PC-9 (cell line): ENCODE measurements at regions of chr1 and their contacts with region 1.

Region 1: GRCh38 chr1:184075055-184076029 is 23.8 kb downstream of the TSEN15 start:
- DNase-seq: peak; percentile 15 to 43
- H3K4me3 ChIP-seq: no peak overlapping the region
- H3K27ac ChIP-seq: no peak overlapping the region
- H3K4me1 ChIP-seq: no peaks in the 10 kb centered on the region
- H3K27me3 ChIP-seq: no peaks in the 10 kb centered on the region
- CTCF ChIP-seq: peak; percentile 85

Region 2: DNA sequence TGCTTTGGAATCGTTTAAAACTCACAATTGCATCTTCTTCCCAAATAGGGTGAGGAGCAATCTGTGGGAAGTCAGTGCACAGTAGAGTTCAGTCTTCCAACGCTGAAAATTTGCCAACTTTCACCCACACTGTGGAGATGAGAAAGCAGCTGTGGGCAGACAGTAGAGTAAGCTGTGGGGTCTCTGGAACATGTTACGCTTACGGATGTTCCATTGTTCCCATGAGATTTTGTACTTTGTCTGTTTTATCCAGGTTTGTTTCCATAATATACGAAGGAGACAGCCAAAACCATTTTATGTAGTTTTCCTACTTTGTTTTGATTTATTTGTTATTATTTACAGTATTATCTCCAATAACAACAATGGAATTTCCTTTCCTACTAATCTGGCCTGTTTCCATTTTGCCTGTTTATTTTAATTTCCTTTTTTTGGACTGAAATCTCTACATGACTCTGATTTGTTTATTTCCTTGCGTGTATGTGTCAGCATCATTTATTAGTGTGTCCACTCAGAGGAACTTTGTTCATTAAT is 335.5 kb before region 1 on chr1:
- CTCF ChIA-PET with region 1: no interaction called
- POLR2A ChIA-PET with region 1: no interaction called
- intact Hi-C with region 1: no loop called
- DNase-seq: no peak
- H3K4me3 ChIP-seq: no peak overlapping the region
- H3K27ac ChIP-seq: no peak overlapping the region
- H3K4me1 ChIP-seq: peaks cover 23% of the 10 kb centered on the region
- H3K27me3 ChIP-seq: no peaks in the 10 kb centered on the region
- CTCF ChIP-seq: no peak

Region 3: DNA sequence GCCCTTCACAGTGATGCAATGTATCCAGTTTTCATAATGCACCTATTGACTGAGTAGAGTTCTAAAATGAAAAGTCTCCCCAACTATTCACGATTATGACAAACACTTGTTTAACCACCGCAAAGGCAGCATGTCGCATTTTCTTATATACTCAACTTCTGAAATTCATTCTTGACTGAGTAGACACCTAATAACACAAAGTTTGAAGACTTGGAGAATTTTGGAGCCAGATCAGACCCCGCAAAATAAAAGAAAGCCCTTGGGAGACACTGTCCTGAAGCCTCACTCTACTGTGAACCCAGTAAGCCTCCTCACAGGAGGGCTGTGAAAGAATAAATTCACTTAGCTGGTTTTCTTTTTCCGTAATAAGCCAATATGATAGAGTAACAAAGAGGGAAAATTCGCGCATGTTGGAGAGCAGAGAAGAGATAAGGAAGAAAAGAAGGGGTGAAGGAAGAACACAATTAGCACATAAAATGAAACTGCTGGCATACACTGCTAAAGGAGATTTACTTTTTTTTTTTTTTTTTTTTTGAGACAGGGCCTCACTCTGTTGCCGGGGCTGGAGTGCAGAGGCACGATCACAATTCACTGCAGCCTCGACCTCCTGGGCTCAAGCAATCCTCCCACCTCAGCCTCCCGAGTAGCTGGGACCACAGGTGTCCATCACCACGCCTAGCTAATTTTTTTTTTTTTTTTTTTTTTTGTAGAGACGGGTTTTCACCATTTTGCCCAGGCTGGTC is 37.3 kb before region 1 on chr1:
- CTCF ChIA-PET with region 1: no interaction called
- POLR2A ChIA-PET with region 1: no interaction called
- intact Hi-C with region 1: no loop called
- DNase-seq: no peak
- H3K4me3 ChIP-seq: no peak overlapping the region
- H3K27ac ChIP-seq: no peak overlapping the region
- H3K4me1 ChIP-seq: no peaks in the 10 kb centered on the region
- H3K27me3 ChIP-seq: peaks cover 16% of the 10 kb centered on the region; the same call in 1 of the 2 replicates
- CTCF ChIP-seq: no peak

Region 4: GRCh38 chr1:184563308-184563707 is 488.0 kb after region 1 on chr1:
- CTCF ChIA-PET with region 1: no interaction called
- POLR2A ChIA-PET with region 1: no interaction called
- intact Hi-C with region 1: loop called (anchors 1 kb)
- DNase-seq: no peak
- H3K4me3 ChIP-seq: no peak overlapping the region
- H3K27ac ChIP-seq: no peak overlapping the region
- H3K4me1 ChIP-seq: no peaks in the 10 kb centered on the region
- H3K27me3 ChIP-seq: no peaks in the 10 kb centered on the region
- CTCF ChIP-seq: peak; percentile 60

Region 5: GRCh38 chr1:184574588-184574987 is 499.2 kb after region 1 on chr1:
- CTCF ChIA-PET with region 1: interaction called, 17 read pairs
- POLR2A ChIA-PET with region 1: no interaction called
- intact Hi-C with region 1: no loop called
- DNase-seq: no peak
- H3K4me3 ChIP-seq: no peak overlapping the region
- H3K27ac ChIP-seq: no peak overlapping the region
- H3K4me1 ChIP-seq: no peaks in the 10 kb centered on the region
- H3K27me3 ChIP-seq: no peaks in the 10 kb centered on the region
- CTCF ChIP-seq: no peak